HepG2 (cell line): ENCODE measurements at regions of chr1 and their contacts with region 1.

Region 1: GRCh38 chr1:215526553-215527151 is 40.5 kb upstream of the KCTD3 start:
- DNase-seq: peak; percentile 45
- ATAC-seq: peak; percentile 56
- H3K4me3 ChIP-seq: no peak overlapping the region
- H3K27ac ChIP-seq: no peak overlapping the region
- H3K4me1 ChIP-seq: no peaks in the 10 kb centered on the region
- H3K27me3 ChIP-seq: no peaks in the 10 kb centered on the region
- CTCF ChIP-seq: peak; percentile 70
- EP300 ChIP-seq: no peak
- POLR2A ChIP-seq: no peak
- RAD21 ChIP-seq: peak; percentile 52

Region 2: GRCh38 chr1:214632091-214632490 is 894.6 kb before region 1 on chr1:
- CTCF ChIA-PET with region 1: interaction called, 13 read pairs
- POLR2A ChIA-PET with region 1: no interaction called
- in situ Hi-C with region 1: no loop called
- intact Hi-C with region 1: loop called (anchors 1 kb)
- DNase-seq: no peak
- ATAC-seq: no peak
- H3K4me3 ChIP-seq: no peak overlapping the region
- H3K27ac ChIP-seq: no peak overlapping the region
- H3K4me1 ChIP-seq: peaks cover 11% of the 10 kb centered on the region; the same call in 1 of the 2 replicates
- H3K27me3 ChIP-seq: no peaks in the 10 kb centered on the region
- CTCF ChIP-seq: no peak
- EP300 ChIP-seq: no peak
- POLR2A ChIP-seq: no peak
- RAD21 ChIP-seq: no peak

Region 3: GRCh38 chr1:214808845-214809460 is 717.7 kb before region 1 on chr1:
- CTCF ChIA-PET with region 1: no interaction called
- POLR2A ChIA-PET with region 1: no interaction called
- in situ Hi-C with region 1: loop called (anchors 10 kb)
- intact Hi-C with region 1: loop called (anchors 1 kb)
- DNase-seq: peak; percentile 22
- ATAC-seq: peak; percentile 53; the same call in 1 of the 3 replicates
- H3K4me3 ChIP-seq: no peak overlapping the region
- H3K27ac ChIP-seq: no peak overlapping the region
- H3K4me1 ChIP-seq: no peaks in the 10 kb centered on the region
- H3K27me3 ChIP-seq: no peaks in the 10 kb centered on the region
- CTCF ChIP-seq: peak; percentile 40; the same call in 1 of the 2 replicates
- EP300 ChIP-seq: no peak
- POLR2A ChIP-seq: no peak
- RAD21 ChIP-seq: no peak

Region 4: GRCh38 chr1:214823311-214824117 is 703.1 kb before region 1 on chr1:
- CTCF ChIA-PET with region 1: no interaction called
- POLR2A ChIA-PET with region 1: no interaction called
- in situ Hi-C with region 1: loop called (anchors 10 kb)
- intact Hi-C with region 1: loop called (anchors 5 kb)
- DNase-seq: no peak
- ATAC-seq: no peak; the same call in 2 of the 3 replicates
- H3K4me3 ChIP-seq: no peak overlapping the region
- H3K27ac ChIP-seq: no peak overlapping the region
- H3K4me1 ChIP-seq: no peaks in the 10 kb centered on the region
- H3K27me3 ChIP-seq: no peaks in the 10 kb centered on the region
- CTCF ChIP-seq: peak; percentile 32
- EP300 ChIP-seq: no peak
- POLR2A ChIP-seq: no peak
- RAD21 ChIP-seq: no peak